ENCODE measurements at regions of chr16 and their contacts with region 1.

Region 1: DNA sequence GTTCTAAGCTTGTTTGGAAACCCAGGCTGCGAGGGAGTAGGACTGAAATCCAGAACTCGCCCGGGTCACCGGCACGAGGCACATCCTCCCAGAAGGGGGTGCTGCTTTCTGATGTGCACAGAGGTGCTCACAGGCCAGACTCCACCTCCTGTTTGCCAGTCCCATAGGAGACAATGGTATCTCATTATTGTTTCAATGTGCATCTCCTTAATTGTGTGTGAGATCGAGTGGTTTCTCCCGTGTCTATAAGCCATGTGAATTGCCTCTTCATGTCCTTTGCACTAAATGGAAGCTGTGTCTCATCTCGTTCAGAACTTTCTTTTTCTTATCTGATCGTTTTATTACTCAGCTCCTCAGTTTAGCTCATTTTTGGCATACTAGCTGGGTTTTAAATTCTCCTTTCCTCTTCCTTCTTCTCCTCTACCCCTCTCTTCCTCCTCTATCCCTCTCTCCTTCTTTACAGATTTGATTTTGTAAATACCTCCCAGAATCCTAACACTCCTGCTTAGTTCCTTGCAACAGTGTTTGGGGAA is 32.1 kb upstream of the PRKCB start:
- DNase-seq: peak; percentile 62
- H3K4me3 Mint-ChIP-seq: no peak overlapping the region
- H3K27ac Mint-ChIP-seq: peak overlapping the region; percentile 27
- H3K4me1 Mint-ChIP-seq: peaks cover 19% of the 10 kb centered on the region
- H3K27me3 Mint-ChIP-seq: peaks cover 8% of the 10 kb centered on the region

Region 2: GRCh38 chr16:23835390-23836077 is 31.9 kb after region 1 on chr16 and contains the start of gene PRKCB:
- intact Hi-C with region 1: loop called (anchors 1 kb)
- DNase-seq: peak; percentile 90
- H3K4me3 Mint-ChIP-seq: peak within 1 kb of the TSS; percentile 96
- H3K27ac Mint-ChIP-seq: peak within 1 kb of the TSS; percentile 90
- H3K4me1 Mint-ChIP-seq: peaks cover 69% of the 10 kb centered on the region
- H3K27me3 Mint-ChIP-seq: peaks cover 12% of the 10 kb centered on the region
- total RNA-seq, gene PRKCB: 100 and 109 TPM in 2 replicates

Region 3: GRCh38 chr16:23877107-23878090 is 73.7 kb after region 1 on chr16:
- intact Hi-C with region 1: loop called (anchors 5 kb)
- DNase-seq: no peak
- H3K4me3 Mint-ChIP-seq: no peak overlapping the region
- H3K27ac Mint-ChIP-seq: no peak overlapping the region
- H3K4me1 Mint-ChIP-seq: peaks cover 79% of the 10 kb centered on the region
- H3K27me3 Mint-ChIP-seq: no peaks in the 10 kb centered on the region

Region 4: DNA sequence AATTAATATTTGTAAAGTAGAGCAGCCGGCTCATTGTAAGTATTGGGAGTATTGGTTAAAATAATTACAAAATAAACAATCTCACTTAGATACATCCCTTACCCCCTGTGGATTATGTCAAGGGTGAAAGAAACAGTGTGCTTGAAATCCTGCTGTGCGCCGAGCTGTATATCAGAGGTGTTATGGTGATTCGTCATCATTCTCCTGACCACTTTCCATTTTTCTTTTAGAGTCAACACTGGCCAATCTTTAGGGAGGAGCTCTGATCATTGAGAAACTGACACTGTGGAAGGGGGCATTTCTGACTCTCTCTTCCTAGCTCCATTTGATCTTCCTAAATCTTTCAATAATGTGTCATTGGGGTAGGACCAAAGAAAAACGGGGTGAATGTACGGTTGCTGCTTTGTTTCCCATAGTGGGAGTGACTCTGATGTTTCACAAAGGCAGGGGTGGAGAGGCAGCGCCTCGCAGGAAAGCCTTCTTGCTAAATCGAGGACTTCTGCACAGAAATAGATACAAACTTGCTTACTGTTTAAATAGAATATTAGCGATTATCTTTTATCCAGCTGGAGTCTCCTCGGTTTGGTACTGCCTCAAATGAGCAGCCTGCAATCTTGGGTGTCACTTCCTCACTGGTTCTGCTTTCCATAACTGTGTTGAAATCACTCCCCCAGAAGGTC is 155.6 kb after region 1 on chr16:
- intact Hi-C with region 1: no loop called
- DNase-seq: no peak
- H3K4me3 Mint-ChIP-seq: peak overlapping the region; percentile 54
- H3K27ac Mint-ChIP-seq: peak overlapping the region; percentile 82
- H3K4me1 Mint-ChIP-seq: peaks cover 66% of the 10 kb centered on the region
- H3K27me3 Mint-ChIP-seq: no peaks in the 10 kb centered on the region

Region 5: DNA sequence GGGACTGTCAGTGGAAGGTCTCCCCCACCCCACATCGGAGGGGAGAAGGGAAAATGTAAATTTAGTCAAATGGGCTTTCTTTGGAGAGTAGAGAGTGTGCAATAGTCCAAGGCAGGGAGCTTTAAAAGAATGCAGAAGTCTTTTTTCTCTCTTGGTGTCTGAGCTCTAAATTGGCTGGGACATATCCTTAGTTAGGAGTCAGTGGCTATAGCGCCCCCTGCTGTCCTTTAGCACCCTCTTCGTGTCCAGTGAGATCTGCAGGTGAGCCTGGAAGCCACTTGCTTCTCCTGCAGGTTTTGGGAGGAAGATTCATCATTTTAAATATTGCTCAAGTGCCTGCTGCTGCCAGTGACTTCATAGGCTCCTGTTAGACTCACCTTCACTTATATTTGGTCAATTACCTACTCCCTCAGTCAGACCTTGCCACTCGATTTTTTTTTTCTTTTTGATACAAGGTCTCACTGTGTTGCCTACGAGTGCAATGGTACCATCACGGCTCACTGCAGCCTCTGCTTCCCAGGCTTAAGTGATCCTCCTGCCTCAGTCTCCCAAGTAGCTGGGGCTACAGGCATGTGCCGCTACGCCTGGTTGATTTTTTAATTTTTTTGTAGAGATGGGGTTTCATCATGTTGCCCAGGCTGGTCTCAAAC is 206.9 kb after region 1 on chr16:
- intact Hi-C with region 1: loop called (anchors 1 kb)
- DNase-seq: peak; percentile 63
- H3K4me3 Mint-ChIP-seq: no peak overlapping the region
- H3K27ac Mint-ChIP-seq: no peak overlapping the region
- H3K4me1 Mint-ChIP-seq: peaks cover 41% of the 10 kb centered on the region
- H3K27me3 Mint-ChIP-seq: no peaks in the 10 kb centered on the region

Region 6: DNA sequence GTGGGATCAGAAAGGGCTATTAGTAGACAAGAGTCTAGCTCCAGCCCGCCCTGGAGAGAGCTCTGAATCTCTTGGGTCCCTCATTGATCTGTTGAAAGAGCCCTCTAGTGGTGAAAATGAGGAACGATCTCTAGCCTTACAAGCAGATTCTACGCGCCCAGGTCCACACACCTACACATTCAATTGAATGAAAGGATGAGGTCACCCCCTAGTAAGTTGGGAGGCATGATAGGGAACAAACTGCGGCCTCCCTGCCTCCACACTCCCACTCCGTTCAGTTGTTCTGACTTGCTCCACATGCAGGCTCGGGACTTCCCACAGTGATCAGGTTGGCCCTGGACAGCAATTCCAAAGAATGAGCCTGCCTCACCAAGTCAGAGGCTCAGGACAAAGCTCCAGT is 449.5 kb after region 1 on chr16:
- intact Hi-C with region 1: loop called (anchors 2 kb)
- DNase-seq: peak; percentile 6
- H3K4me3 Mint-ChIP-seq: no peak overlapping the region
- H3K27ac Mint-ChIP-seq: no peak overlapping the region
- H3K4me1 Mint-ChIP-seq: no peaks in the 10 kb centered on the region
- H3K27me3 Mint-ChIP-seq: peaks cover 28% of the 10 kb centered on the region

Measured in activated T-helper 1 cell treated with anti-CD3 and anti-CD28 coated beads, Interleukin-12 subunit alpha, Interleukin-12 subunit beta, Interleukin-2, Interleukin-4 antibody, amounts not matched to agents 30 ng/mL and 10 ng/mL and 1 ng/mL, durations not matched to agents 14 hours and 24 hours and 36 hours (primary cell).